ENCODE measurements at regions of chr4 and their contacts with region 1.

Region 1: DNA sequence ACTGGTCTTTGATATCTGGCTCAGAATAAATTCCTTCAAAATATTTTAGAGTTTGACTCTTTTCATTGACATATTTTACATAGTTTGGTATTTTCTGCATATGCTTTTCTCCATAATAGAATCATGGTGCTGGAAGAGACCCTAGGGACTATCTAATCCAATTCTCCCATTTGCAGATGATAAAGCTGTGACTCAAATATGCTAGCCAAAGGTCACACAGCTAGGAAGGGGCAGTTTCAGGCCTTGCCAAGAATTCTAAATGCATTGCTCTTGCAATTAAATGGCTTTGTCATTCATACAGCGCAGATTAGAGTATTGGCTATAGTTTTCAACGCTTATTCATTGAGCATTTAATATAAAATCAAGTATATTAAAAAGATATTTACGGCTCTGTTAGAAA is 374.1 kb upstream of the RASGEF1B start:
- DNase-seq: no peak
- ATAC-seq: no peak

Region 2: DNA sequence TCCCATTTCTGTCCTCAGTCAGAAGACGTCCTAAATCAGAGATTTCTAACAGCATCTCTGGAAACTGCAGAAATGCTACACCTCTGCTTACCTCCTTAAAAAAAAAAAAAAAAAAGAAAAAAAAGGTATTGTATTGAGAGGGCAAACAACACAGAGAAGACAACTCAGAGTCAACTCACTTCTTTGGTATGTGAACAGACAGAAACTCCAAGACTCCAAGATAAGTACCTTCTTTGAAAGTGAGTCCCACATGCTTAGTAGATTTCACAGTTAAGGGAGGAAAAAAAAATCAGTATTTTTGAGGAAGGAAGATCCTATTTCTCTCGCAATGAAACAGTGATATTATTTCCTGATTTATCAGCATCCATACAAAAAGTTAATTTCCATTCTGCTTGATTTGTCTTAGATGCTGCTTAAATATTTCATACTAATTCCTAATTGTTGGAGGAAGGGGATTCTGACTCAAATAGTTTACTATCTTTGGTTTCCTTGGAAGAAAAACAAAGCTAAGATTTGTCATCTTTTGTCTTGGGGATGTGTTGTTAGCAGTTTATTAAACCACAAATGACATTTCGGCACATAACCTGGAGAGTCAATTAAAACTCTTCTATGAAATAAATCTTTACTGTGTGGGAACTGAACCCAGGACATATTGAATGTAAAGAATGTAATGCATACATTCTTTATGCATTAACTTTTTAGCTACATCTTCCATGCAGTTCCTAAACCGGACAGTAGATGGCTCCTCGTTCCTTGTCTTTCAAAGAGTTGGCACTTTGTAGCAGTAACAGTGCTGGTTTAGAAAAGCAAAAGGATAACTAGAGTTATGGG is 378.7 kb before region 1 on chr4:
- intact Hi-C with region 1: loop called (anchors 2 kb)
- DNase-seq: peak; percentile 80
- ATAC-seq: no peak

Region 3: DNA sequence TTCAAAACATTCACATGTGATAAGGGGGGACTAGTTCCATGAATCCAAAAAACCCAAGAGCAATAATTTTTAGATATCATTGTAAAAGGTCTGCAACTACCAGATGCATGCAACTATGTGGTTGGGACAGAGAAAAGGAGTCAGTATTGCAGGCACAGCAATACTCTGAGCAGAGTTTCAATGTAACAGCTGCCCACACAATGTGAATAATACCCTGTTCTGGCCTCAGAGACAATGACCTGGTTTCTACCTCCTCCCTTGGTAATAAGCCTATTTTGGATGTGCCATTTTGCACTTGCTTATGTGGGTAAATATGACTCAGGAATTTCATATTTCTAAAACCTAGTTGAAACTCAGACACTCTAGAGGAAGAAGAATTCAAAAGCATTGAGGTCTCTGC is 179.3 kb before region 1 on chr4:
- intact Hi-C with region 1: no loop called
- DNase-seq: no peak
- ATAC-seq: no peak

Region 4: GRCh38 chr4:81919238-81919637 is 73.5 kb after region 1 on chr4:
- intact Hi-C with region 1: no loop called
- DNase-seq: no peak
- ATAC-seq: peak; percentile 34

Measured in sciatic nerve (tissue), 2 donors.